ENCODE measurements at regions of chr11 and their contacts with region 1.

Region 1: GRCh38 chr11:46238967-46239800 is 38.3 kb upstream of the CREB3L1 start:
- DNase-seq: peak; percentile 94
- ATAC-seq: peak; percentile 86

Region 2: GRCh38 chr11:46121724-46122477 is 117.3 kb before region 1 on chr11:
- intact Hi-C with region 1: loop called (anchors 5 kb)
- DNase-seq: peak; percentile 90
- ATAC-seq: peak; percentile 33

Region 3: GRCh38 chr11:46295312-46296058 is 56.3 kb after region 1 on chr11:
- intact Hi-C with region 1: loop called (anchors 5 kb)
- DNase-seq: peak; percentile 87
- ATAC-seq: peak; percentile 89

Region 4: GRCh38 chr11:46315033-46315738 is 76.0 kb after region 1 on chr11:
- intact Hi-C with region 1: loop called (anchors 2 kb)
- DNase-seq: no peak
- ATAC-seq: peak; percentile 39

Region 5: DNA sequence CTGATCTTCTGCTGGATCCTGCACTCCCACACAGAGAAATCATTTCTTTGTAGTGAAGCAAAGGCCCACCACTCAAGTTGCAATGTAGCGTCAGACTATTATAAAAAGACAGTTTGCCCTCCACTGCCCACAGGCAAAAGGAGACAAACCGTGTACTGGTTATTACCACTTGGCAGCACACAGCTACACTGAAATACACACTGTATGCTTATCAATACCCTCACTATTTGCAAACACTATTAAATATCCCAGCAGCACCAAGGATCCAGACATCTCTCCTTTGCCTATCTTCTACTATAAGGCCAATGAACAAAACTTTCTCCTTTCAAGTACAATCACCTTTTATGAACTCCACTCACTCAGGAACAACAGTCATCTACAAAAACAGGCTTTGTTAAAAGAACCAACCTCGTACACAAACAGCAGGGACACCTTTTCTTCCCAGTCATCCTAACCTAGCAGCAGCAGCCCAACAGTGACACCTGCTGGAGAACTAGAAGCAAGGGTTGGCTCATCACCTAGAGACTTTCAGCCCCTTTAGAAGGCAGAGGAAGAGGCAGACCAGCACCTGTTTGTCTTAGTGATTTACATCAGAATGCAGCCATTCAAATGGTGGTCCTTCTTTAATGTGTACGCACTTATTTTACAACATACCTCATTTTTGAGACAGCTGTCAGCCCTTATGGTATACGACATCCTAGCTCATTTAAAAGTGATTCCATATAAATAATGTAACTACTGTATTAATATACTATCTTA is 298.5 kb after region 1 on chr11:
- intact Hi-C with region 1: loop called (anchors 10 kb)
- DNase-seq: no peak
- ATAC-seq: peak; percentile 74